Endothelial cell of umbilical vein (primary cell): ENCODE measurements at regions of chr5 and their contacts with region 1.

Region 1: GRCh38 chr5:129904102-129904666 is at the start of gene CHSY3:
- DNase-seq: peak; percentile 89
- H3K4me3 ChIP-seq: peak within 1 kb of the TSS; percentile 35 to 89 (median 52)
- H3K27ac ChIP-seq: peak within 1 kb of the TSS; percentile 18
- H3K4me1 ChIP-seq: peaks cover 15% of the 10 kb centered on the region
- H3K27me3 ChIP-seq: no peaks in the 10 kb centered on the region
- CTCF ChIP-seq: peak in 1 of 2 donors; percentile 10
- POLR2A ChIP-seq: peak; percentile 39
- total RNA-seq, gene CHSY3: 6.8 and 8.4 TPM in 2 replicates

Region 2: DNA sequence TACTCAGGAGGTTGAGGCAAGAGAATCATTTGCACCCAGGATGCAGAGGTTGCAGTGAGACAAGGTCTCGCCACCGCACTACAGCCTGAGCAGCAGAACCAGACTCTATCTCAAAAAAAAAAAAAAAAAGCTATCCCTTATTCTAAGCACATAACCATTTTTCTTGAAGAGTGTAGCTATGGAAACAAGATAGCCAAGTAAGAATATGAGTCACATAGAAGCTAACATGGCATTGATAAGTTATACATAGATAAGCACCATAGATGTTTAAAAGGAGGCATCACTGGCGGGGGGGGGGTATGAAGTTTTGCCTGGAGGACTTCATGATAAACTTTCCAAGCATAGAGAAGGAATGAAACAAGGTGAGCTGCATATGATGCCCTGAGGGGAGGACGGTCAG is 26.0 kb after region 1 on chr5:
- CTCF ChIA-PET with region 1: no interaction called
- POLR2A ChIA-PET with region 1: no interaction called
- dilution Hi-C with region 1: no loop called
- intact Hi-C with region 1: no loop called
- DNase-seq: no peak
- H3K4me3 ChIP-seq: no peak overlapping the region
- H3K27ac ChIP-seq: no peak overlapping the region
- H3K4me1 ChIP-seq: no peaks in the 10 kb centered on the region
- H3K27me3 ChIP-seq: no peaks in the 10 kb centered on the region
- CTCF ChIP-seq: no peak
- POLR2A ChIP-seq: no peak

Region 3: DNA sequence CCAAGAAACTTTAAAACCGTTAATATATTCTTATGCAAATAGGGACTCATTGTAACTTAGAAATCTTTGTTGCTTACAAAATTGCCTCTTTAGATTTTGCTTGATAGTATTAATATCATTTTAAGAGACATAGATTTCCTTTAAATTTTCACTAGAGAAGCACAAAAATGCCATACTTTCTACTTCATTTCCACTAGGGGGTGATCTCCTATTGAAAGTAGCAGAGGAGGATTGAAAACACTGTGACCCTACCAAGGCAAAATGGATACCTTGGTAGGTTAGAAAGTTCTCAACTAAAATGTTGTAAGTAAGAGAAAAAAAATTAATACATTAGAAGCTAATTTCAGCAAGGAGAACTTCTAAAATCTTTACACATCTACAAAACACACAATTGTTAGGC is 205.0 kb after region 1 on chr5:
- CTCF ChIA-PET with region 1: interaction called, 5 read pairs
- POLR2A ChIA-PET with region 1: no interaction called
- dilution Hi-C with region 1: no loop called
- intact Hi-C with region 1: loop called (anchors 1 kb)
- DNase-seq: peak; percentile 33
- H3K4me3 ChIP-seq: no peak overlapping the region
- H3K27ac ChIP-seq: no peak overlapping the region
- H3K4me1 ChIP-seq: no peaks in the 10 kb centered on the region
- H3K27me3 ChIP-seq: no peaks in the 10 kb centered on the region
- CTCF ChIP-seq: peak; percentile 27 to 47
- POLR2A ChIP-seq: no peak

Region 4: DNA sequence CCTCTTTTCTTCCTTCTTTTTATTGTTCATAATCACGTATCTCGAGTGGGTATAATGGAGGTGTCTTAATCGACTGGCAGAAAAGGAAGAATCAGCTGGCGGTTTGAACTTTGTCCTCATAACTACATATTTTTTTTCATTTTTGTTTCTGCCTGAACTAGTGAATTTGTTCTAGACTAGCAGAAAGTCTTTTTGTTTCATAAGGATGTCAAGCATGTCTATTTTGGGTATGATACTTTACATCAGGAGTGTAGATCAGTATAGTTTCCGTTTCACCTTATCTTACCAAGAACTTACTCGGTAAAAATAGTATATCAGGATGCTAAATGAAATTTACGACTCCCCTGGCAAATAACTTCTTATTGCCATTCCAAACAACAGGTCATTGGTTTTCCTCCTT is 278.9 kb after region 1 on chr5:
- CTCF ChIA-PET with region 1: no interaction called
- POLR2A ChIA-PET with region 1: no interaction called
- dilution Hi-C with region 1: no loop called
- intact Hi-C with region 1: no loop called
- DNase-seq: no peak
- H3K4me3 ChIP-seq: no peak overlapping the region
- H3K27ac ChIP-seq: no peak overlapping the region
- H3K4me1 ChIP-seq: no peaks in the 10 kb centered on the region
- H3K27me3 ChIP-seq: no peaks in the 10 kb centered on the region
- CTCF ChIP-seq: no peak
- POLR2A ChIP-seq: no peak

Region 5: DNA sequence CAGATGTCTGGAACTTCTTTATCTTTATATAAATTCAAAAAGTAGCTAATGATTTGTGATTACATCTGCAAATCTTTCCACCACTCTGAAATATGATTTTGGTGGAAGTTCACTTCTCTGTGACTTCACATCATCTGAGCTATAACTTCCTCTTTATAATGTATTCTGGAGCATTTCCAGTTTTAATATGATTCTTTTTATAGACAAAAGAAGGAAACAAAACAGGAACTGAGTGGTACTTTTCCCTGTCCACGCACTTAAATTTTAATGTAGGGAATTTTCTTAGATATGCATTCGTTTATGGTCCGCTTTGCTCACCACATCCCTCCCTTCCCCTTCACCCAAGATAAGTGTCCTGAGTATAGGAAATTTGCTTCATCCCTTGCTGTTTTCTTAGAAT is 333.5 kb after region 1 on chr5:
- CTCF ChIA-PET with region 1: no interaction called
- POLR2A ChIA-PET with region 1: no interaction called
- dilution Hi-C with region 1: no loop called
- intact Hi-C with region 1: loop called (anchors 10 kb)
- DNase-seq: peak; percentile 87
- H3K4me3 ChIP-seq: no peak overlapping the region
- H3K27ac ChIP-seq: peak overlapping the region; percentile 2
- H3K4me1 ChIP-seq: peaks cover 13% of the 10 kb centered on the region
- H3K27me3 ChIP-seq: no peaks in the 10 kb centered on the region
- CTCF ChIP-seq: no peak
- POLR2A ChIP-seq: no peak

Region 6: GRCh38 chr5:130549884-130550561 is 645.8 kb after region 1 on chr5:
- CTCF ChIA-PET with region 1: interaction called, 3 read pairs
- POLR2A ChIA-PET with region 1: no interaction called
- dilution Hi-C with region 1: no loop called
- intact Hi-C with region 1: loop called (anchors 10 kb)
- DNase-seq: peak; percentile 73
- H3K4me3 ChIP-seq: no peak overlapping the region
- H3K27ac ChIP-seq: peak overlapping the region; percentile 63
- H3K4me1 ChIP-seq: peaks cover 12% of the 10 kb centered on the region
- H3K27me3 ChIP-seq: no peaks in the 10 kb centered on the region
- CTCF ChIP-seq: no peak
- POLR2A ChIP-seq: no peak

Region 7: GRCh38 chr5:130871346-130872086 is 967.3 kb after region 1 on chr5:
- CTCF ChIA-PET with region 1: interaction called, 10 read pairs
- POLR2A ChIA-PET with region 1: no interaction called
- dilution Hi-C with region 1: no loop called
- intact Hi-C with region 1: loop called (anchors 1 kb)
- DNase-seq: peak; percentile 36
- H3K4me3 ChIP-seq: no peak overlapping the region
- H3K27ac ChIP-seq: no peak overlapping the region
- H3K4me1 ChIP-seq: no peaks in the 10 kb centered on the region
- H3K27me3 ChIP-seq: no peaks in the 10 kb centered on the region
- CTCF ChIP-seq: peak; percentile 35 to 52
- POLR2A ChIP-seq: no peak

Region 8: DNA sequence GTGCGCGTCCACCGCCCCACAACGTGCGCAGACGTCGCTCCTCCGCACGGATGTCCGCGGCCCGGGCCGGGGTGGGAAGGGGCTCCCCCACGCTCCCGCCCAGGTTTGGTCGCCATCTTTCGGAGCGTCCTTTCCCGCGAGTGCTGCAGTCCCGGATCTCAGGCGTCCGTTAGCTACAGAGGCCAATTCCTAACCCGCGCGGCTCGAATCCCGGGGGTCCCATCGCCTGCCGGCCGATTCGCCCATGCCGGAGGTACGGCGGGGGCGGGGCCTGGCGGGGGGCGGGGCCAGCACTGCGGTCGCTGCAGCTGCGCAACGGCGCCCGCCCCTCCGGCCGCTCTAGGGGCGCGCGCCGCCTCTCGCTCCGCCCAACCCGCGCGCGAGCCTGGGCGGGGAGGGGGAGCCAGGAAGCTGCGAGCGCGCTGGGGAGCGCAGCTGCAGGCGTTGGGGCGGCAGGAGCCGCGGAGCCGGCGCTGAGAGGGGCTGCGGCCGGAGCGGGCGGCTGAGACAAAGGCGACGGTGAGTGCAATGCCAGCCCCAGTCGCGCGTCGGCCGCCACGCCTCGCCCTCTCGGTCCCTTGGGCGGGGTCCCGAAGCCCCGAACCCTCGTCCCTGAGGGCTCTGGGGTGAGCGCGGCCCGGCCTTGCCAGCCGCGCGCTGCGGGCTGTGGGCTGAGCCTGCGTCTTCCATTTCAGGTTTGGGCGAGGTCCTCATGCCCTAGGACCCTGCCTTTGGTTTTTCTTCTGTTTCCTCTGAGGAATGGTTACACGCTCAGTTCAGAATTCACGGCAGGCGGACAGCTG is 1359.7 kb after region 1 on chr5 and contains the start of gene CDC42SE2:
- CTCF ChIA-PET with region 1: no interaction called
- POLR2A ChIA-PET with region 1: no interaction called
- dilution Hi-C with region 1: no loop called
- intact Hi-C with region 1: loop called (anchors 2 kb)
- DNase-seq: peak; percentile 87
- H3K4me3 ChIP-seq: peak within 1 kb of the TSS; percentile 71 to 97 (median 96)
- H3K27ac ChIP-seq: peak within 1 kb of the TSS; percentile 82
- H3K4me1 ChIP-seq: peaks cover 26% of the 10 kb centered on the region
- H3K27me3 ChIP-seq: no peaks in the 10 kb centered on the region
- CTCF ChIP-seq: no peak
- POLR2A ChIP-seq: peak; percentile 93
- total RNA-seq, gene CDC42SE2: 21.2 and 21.9 TPM in 2 replicates